H1 (cell line): ENCODE measurements at regions of chr15 and their contacts with region 1.

Region 1: GRCh38 chr15:88246666-88247446 is 9.7 kb downstream of the NTRK3 start:
- DNase-seq: peak; percentile 70 to 92
- H3K4me3 ChIP-seq: peak overlapping the region in 3 of 4 experiments; percentile 19 to 45 (median 34); a peak in 4 of 8 replicates
- H3K27ac ChIP-seq: no peak overlapping the region
- H3K4me1 ChIP-seq: peaks cover 0 to 7% (median 2%) of the 10 kb centered on the region in 4 experiments; a peak in 3 of 7 replicates
- H3K27me3 ChIP-seq: peaks cover 0 to 4% (median 2%) of the 10 kb centered on the region in 4 experiments; a peak in 3 of 7 replicates
- CTCF ChIP-seq: peak; percentile 92 to 96 (median 95)
- EP300 ChIP-seq: no peak
- POLR2A ChIP-seq: no peak
- RAD21 ChIP-seq: peak; percentile 80 to 85

Region 2: DNA sequence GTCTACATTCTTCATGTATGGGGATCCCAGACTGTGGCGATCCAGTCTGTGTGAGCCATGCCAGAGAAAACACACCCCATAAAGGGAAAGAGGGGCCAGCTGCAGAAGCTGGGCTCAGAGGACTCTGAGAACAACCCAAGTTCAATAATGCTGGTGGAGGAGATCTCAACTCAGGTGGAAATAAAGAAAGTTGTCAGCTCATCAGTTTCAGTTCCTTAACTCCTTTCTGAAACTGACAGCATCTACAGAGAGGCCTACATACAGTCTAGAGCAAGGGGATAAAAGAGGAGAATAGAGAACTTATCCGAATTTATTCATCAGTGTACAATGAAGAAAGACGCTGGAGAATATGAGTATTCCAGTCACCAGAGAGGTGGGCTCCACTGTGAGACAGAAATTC is 67.3 kb before region 1 on chr15:
- CTCF ChIA-PET with region 1: interaction called, 13 read pairs
- POLR2A ChIA-PET with region 1: no interaction called
- DNase-seq: no peak
- H3K4me3 ChIP-seq: no peak overlapping the region
- H3K27ac ChIP-seq: no peak overlapping the region
- H3K4me1 ChIP-seq: no peaks in the 10 kb centered on the region
- H3K27me3 ChIP-seq: no peaks in the 10 kb centered on the region
- CTCF ChIP-seq: no peak
- EP300 ChIP-seq: no peak
- POLR2A ChIP-seq: no peak
- RAD21 ChIP-seq: no peak

Region 3: DNA sequence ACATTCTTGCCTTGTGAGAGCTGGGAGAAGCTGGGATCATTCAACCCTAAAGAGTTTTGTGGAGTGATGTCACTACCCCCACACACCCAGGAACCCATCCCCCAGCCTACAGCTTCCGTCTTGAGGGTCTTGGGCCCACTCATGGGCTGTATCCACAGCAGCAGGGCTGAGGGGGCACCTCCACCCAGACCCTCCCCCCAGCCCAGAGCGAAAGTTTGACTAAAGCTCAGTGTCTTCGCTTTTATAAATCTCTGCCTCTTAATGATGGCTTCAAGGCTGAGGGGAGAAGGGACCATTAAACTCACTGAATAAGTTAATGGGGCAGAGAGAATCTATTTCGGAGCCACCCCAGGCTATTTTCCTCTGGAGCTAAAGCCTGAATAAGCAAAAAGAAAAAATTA is 14.1 kb before region 1 on chr15:
- CTCF ChIA-PET with region 1: interaction called, 99 read pairs
- POLR2A ChIA-PET with region 1: no interaction called
- DNase-seq: no peak
- H3K4me3 ChIP-seq: no peak overlapping the region
- H3K27ac ChIP-seq: no peak overlapping the region
- H3K4me1 ChIP-seq: peaks cover 0 to 4% (median 0%) of the 10 kb centered on the region in 4 experiments; a peak in 3 of 7 replicates
- H3K27me3 ChIP-seq: no peaks in the 10 kb centered on the region
- CTCF ChIP-seq: no peak
- EP300 ChIP-seq: no peak
- POLR2A ChIP-seq: no peak
- RAD21 ChIP-seq: no peak

Region 4: GRCh38 chr15:88274553-88275460 is 28.0 kb after region 1 on chr15:
- CTCF ChIA-PET with region 1: interaction called, 144 read pairs
- POLR2A ChIA-PET with region 1: no interaction called
- DNase-seq: peak; percentile 60 to 89
- H3K4me3 ChIP-seq: no peak overlapping the region
- H3K27ac ChIP-seq: no peak overlapping the region
- H3K4me1 ChIP-seq: no peaks in the 10 kb centered on the region
- H3K27me3 ChIP-seq: peaks cover 0 to 6% (median under 1%) of the 10 kb centered on the region in 4 experiments; a peak in 1 of 7 replicates
- CTCF ChIP-seq: peak; percentile 92 to 97 (median 94)
- EP300 ChIP-seq: no peak
- POLR2A ChIP-seq: no peak
- RAD21 ChIP-seq: peak; percentile 91 to 92

Region 5: GRCh38 chr15:88447206-88447605 is 200.3 kb after region 1 on chr15:
- CTCF ChIA-PET with region 1: interaction called, 106 read pairs
- POLR2A ChIA-PET with region 1: interaction called, 3 read pairs
- DNase-seq: no peak
- H3K4me3 ChIP-seq: no peak overlapping the region
- H3K27ac ChIP-seq: no peak overlapping the region
- H3K4me1 ChIP-seq: no peaks in the 10 kb centered on the region
- H3K27me3 ChIP-seq: peaks cover 0 to 10% (median 5%) of the 10 kb centered on the region in 4 experiments; a peak in 4 of 7 replicates
- CTCF ChIP-seq: no peak
- EP300 ChIP-seq: no peak
- POLR2A ChIP-seq: no peak
- RAD21 ChIP-seq: no peak